CD4-positive, alpha-beta memory T cell (primary cell): ENCODE measurements at regions of chr21 and their contacts with region 1.

Region 1: DNA sequence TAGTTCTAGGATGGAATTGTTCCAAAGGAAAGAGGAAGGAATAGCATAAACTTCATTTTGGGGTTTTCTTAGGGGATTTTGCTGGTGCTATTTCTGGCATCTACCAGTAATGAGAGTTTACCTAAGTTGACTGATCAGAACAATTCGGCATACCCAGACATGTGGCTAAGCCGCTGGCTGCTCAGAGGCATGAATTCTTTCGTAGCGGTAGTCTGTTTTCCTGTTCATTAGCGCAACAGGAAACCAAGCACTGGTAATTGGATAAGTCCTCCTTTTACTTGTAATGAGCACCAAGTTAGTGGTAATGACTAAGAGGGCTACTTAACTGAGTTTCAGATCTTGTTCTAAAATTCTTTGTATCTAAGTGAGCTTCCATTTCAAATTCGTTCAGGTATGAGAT is 38.6 kb downstream of the C21orf91 start:
- DNase-seq: peak; percentile 61 to 91 (median 66)
- H3K4me3 ChIP-seq: peak overlapping the region in 1 of 2 donors; percentile 2
- H3K4me3 Mint-ChIP-seq: peak overlapping the region in 7 of 8 donors; percentile 40 to 90 (median 66)
- H3K27ac ChIP-seq: peak overlapping the region; percentile 67
- H3K27ac Mint-ChIP-seq: peak overlapping the region; percentile 87 to 97 (median 97)
- H3K4me1 ChIP-seq: peaks cover 82% of the 10 kb centered on the region
- H3K4me1 Mint-ChIP-seq: peaks cover 72 to 89% (median 81%) of the 10 kb centered on the region in 4 donors
- H3K27me3 ChIP-seq: no peaks in the 10 kb centered on the region
- H3K27me3 Mint-ChIP-seq: no peaks in the 10 kb centered on the region

Region 2: GRCh38 chr21:17402937-17403336 is 377.6 kb before region 1 on chr21:
- CTCF ChIA-PET with region 1: no interaction called
- POLR2A ChIA-PET with region 1: no interaction called
- intact Hi-C with region 1: no loop called
- DNase-seq: no peak
- H3K4me3 ChIP-seq: no peak overlapping the region
- H3K4me3 Mint-ChIP-seq: no peak overlapping the region
- H3K27ac ChIP-seq: no peak overlapping the region
- H3K27ac Mint-ChIP-seq: no peak overlapping the region
- H3K4me1 ChIP-seq: no peaks in the 10 kb centered on the region
- H3K4me1 Mint-ChIP-seq: no peaks in the 10 kb centered on the region
- H3K27me3 ChIP-seq: no peaks in the 10 kb centered on the region
- H3K27me3 Mint-ChIP-seq: no peaks in the 10 kb centered on the region

Region 3: DNA sequence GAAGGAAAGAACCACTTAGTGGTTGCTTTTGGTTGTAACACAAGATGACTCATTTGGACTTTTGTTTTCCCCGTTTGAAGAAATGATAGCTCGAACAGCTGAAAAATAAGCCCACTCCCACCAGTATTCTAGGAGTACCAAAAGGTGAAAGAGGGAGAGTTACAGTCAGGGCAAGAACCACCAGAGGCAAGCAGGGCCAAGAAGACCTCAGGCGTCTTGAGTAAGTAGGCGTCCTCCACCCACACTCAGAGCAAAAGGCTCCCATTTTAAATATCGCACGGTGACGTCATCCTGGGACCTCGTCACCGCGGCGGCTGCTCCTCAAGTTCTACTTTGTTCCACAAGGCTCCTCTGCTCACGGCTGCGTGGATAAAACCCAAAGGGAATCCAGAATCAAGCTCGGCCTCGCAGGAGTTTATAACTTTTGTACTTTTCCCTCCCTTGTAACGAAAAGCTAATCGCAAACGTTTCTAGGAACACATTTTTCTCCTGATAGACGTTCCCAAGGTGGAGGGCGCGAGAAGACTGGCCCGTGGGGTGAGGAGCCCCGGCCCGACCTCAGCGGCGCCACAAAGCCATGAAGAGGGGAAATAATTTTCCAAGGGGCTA is 169.0 kb before region 1 on chr21:
- CTCF ChIA-PET with region 1: no interaction called
- POLR2A ChIA-PET with region 1: interaction called, 10 read pairs
- intact Hi-C with region 1: loop called (anchors 5 kb)
- DNase-seq: peak; percentile 80 to 91 (median 84)
- H3K4me3 ChIP-seq: peak overlapping the region; percentile 87 to 97
- H3K4me3 Mint-ChIP-seq: peak overlapping the region; percentile 91 to 99 (median 95)
- H3K27ac ChIP-seq: peak overlapping the region; percentile 84
- H3K27ac Mint-ChIP-seq: peak overlapping the region; percentile 95 to 100 (median 99)
- H3K4me1 ChIP-seq: peaks cover 27% of the 10 kb centered on the region
- H3K4me1 Mint-ChIP-seq: peaks cover 17 to 50% (median 25%) of the 10 kb centered on the region in 4 donors
- H3K27me3 ChIP-seq: no peaks in the 10 kb centered on the region
- H3K27me3 Mint-ChIP-seq: no peaks in the 10 kb centered on the region

Region 4: DNA sequence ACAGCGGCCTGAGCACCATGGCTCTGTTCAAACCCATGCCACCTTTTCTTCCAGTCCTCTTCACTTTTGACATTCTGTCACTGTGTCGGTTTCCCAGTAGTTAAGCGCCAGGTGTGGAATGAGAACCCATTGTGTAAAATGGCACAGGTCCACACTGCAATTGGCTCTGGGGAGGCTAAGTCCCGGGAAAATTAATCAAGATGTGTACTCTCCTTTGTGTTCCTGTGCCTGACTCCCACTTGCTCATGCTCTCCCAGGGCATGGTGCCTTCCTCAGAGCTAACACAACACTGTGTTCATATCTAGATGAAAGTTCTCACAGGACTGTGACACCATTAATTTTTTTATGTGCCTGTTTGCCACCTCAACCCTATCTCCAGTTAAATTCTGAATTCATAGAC is 108.8 kb before region 1 on chr21:
- CTCF ChIA-PET with region 1: no interaction called
- POLR2A ChIA-PET with region 1: no interaction called
- intact Hi-C with region 1: no loop called
- DNase-seq: no peak
- H3K4me3 ChIP-seq: no peak overlapping the region
- H3K4me3 Mint-ChIP-seq: no peak overlapping the region
- H3K27ac ChIP-seq: no peak overlapping the region
- H3K27ac Mint-ChIP-seq: no peak overlapping the region
- H3K4me1 ChIP-seq: no peaks in the 10 kb centered on the region
- H3K4me1 Mint-ChIP-seq: no peaks in the 10 kb centered on the region
- H3K27me3 ChIP-seq: no peaks in the 10 kb centered on the region
- H3K27me3 Mint-ChIP-seq: peaks cover 0 to 7% of the 10 kb centered on the region in 2 donors

Region 5: DNA sequence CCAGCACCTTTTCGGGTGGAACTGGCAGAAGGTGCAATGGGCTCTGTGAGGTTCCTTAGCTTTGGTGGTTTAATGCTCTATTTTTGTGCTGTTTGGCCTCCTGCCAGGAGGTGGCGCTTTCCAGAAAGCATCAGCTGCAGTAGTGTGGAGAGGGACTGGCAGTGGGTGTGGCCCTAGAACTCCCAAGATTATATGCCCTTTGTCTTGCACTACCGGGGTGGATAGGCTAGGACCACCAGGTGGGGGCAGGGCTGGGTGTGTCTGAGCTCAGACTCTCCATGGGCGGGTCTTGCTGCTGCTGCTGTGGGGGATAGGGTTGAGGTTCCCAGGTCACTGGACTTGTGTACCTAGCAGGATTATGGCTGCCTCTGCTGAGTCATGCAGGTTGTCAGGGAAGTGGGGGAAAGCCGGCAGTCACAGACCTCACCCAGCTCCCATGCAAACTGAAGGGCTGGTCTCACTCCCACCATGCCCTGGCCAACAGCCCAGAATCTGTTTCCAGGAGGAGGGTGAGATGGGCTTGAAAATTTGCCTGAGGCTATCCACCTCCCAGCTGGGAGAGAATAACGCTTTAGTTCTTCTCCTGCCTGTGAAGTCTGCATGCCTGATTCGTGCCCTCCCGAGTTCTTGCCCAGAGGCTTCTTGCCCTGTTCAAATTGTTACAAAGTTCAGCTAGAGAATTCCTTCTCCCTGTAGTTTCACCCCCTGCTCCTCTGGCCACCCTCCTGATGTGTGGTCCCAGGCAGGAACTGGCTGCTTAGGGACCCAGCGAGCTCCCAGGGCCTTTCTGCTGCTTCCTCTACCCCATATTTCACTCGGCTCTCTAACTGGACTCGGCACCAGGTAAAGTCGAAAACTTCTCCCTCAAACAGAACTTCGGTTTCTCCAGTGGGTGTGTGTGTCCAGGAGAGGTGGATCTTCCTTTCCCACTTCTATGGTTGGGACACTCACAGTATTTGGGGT is 91.3 kb before region 1 on chr21:
- CTCF ChIA-PET with region 1: interaction called, 10 read pairs
- POLR2A ChIA-PET with region 1: interaction called, 3 read pairs
- intact Hi-C with region 1: loop called (anchors 1 kb)
- DNase-seq: peak; percentile 35 to 59 (median 43)
- H3K4me3 ChIP-seq: no peak overlapping the region
- H3K4me3 Mint-ChIP-seq: peak overlapping the region in 4 of 8 donors; percentile 9 to 35 (median 20)
- H3K27ac ChIP-seq: no peak overlapping the region
- H3K27ac Mint-ChIP-seq: peak overlapping the region in 4 of 7 donors; percentile 18 to 66 (median 52)
- H3K4me1 ChIP-seq: peaks cover 27% of the 10 kb centered on the region
- H3K4me1 Mint-ChIP-seq: peaks cover 29 to 51% (median 39%) of the 10 kb centered on the region in 4 donors
- H3K27me3 ChIP-seq: no peaks in the 10 kb centered on the region
- H3K27me3 Mint-ChIP-seq: no peaks in the 10 kb centered on the region

Region 6: DNA sequence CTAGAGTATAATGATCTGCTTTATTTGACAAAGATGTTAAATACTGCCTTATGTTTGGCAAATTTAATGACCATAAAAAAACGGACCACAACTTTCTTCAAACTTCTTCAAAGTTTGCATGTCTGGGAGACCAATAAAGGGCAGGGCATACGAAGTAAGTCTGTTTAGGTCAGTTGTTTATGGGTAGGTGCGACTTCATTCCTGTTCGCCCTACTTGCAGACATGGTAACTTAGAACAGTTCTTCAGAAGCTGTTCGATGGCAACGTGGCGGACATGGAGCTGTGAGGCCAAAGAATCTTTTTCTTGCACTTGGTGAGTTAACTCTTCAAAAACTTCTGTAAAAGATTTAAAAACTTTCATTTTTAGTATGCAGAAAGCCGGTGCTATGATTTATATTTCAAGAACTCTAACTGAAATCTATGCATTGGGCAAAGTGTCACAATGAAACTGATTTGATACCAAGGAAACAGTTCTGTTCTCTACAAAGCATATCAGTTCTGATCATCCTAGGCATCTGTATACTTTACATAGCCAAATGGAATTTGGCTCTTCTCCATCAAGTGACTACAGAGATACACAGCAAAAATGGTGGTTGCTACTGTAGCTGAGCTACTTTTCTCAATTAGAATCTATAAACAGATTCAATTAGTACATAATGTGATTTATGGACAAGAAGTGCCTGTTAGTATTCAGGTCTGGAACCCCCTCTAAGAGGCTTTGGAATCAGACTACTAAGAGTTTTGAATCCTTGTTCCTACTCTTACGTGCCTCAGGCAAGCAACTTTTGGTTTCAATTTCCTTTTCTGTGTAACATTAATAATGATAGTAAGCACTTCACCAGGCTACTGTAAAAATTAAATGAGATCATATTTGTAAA is 12.9 kb after region 1 on chr21:
- CTCF ChIA-PET with region 1: interaction called, 16 read pairs
- POLR2A ChIA-PET with region 1: interaction called, 158 read pairs
- intact Hi-C with region 1: loop called (anchors 1 kb)
- DNase-seq: peak in 4 of 5 donors; percentile 59 to 66 (median 60)
- H3K4me3 ChIP-seq: peak overlapping the region; percentile 20 to 72
- H3K4me3 Mint-ChIP-seq: peak overlapping the region; percentile 60 to 92 (median 83)
- H3K27ac ChIP-seq: peak overlapping the region; percentile 94
- H3K27ac Mint-ChIP-seq: peak overlapping the region; percentile 87 to 97 (median 92)
- H3K4me1 ChIP-seq: peaks cover 92% of the 10 kb centered on the region
- H3K4me1 Mint-ChIP-seq: peaks cover 49 to 78% (median 57%) of the 10 kb centered on the region in 4 donors
- H3K27me3 ChIP-seq: no peaks in the 10 kb centered on the region
- H3K27me3 Mint-ChIP-seq: no peaks in the 10 kb centered on the region

Region 7: GRCh38 chr21:17813353-17813752 is 32.8 kb after region 1 on chr21:
- CTCF ChIA-PET with region 1: interaction called, 27 read pairs
- POLR2A ChIA-PET with region 1: interaction called, 124 read pairs
- intact Hi-C with region 1: no loop called
- DNase-seq: no peak
- H3K4me3 ChIP-seq: no peak overlapping the region
- H3K4me3 Mint-ChIP-seq: peak overlapping the region in 5 of 8 donors; percentile 20 to 70 (median 55)
- H3K27ac ChIP-seq: no peak overlapping the region
- H3K27ac Mint-ChIP-seq: peak overlapping the region; percentile 3 to 82 (median 80)
- H3K4me1 ChIP-seq: peaks cover 72% of the 10 kb centered on the region
- H3K4me1 Mint-ChIP-seq: peaks cover 38 to 73% (median 57%) of the 10 kb centered on the region in 4 donors
- H3K27me3 ChIP-seq: no peaks in the 10 kb centered on the region
- H3K27me3 Mint-ChIP-seq: no peaks in the 10 kb centered on the region

Region 8: GRCh38 chr21:17988102-17988437 is 207.5 kb after region 1 on chr21:
- CTCF ChIA-PET with region 1: no interaction called
- POLR2A ChIA-PET with region 1: no interaction called
- intact Hi-C with region 1: no loop called
- DNase-seq: no peak
- H3K4me3 ChIP-seq: no peak overlapping the region
- H3K4me3 Mint-ChIP-seq: no peak overlapping the region
- H3K27ac ChIP-seq: no peak overlapping the region
- H3K27ac Mint-ChIP-seq: no peak overlapping the region
- H3K4me1 ChIP-seq: no peaks in the 10 kb centered on the region
- H3K4me1 Mint-ChIP-seq: no peaks in the 10 kb centered on the region
- H3K27me3 ChIP-seq: no peaks in the 10 kb centered on the region
- H3K27me3 Mint-ChIP-seq: peaks cover 0 to 2% of the 10 kb centered on the region in 2 donors